ENCODE measurements at regions of chr3 and their contacts with region 1.

Region 1: GRCh38 chr3:57877116-57877515 is 121.0 kb downstream of the SLMAP start:
- DNase-seq: no peak
- H3K4me3 ChIP-seq: no peak overlapping the region
- H3K27ac ChIP-seq: no peak overlapping the region
- H3K4me1 ChIP-seq: no peaks in the 10 kb centered on the region
- H3K27me3 ChIP-seq: no peaks in the 10 kb centered on the region
- CTCF ChIP-seq: no peak

Region 2: GRCh38 chr3:57939775-57940174 is 62.7 kb after region 1 on chr3:
- CTCF ChIA-PET with region 1: no interaction called
- POLR2A ChIA-PET with region 1: interaction called, 11 read pairs
- intact Hi-C with region 1: no loop called
- DNase-seq: no peak
- H3K4me3 ChIP-seq: no peak overlapping the region
- H3K27ac ChIP-seq: no peak overlapping the region
- H3K4me1 ChIP-seq: 0 out of 2 replicates have a peak, but pooled peaks cover 5% of the 10 kb centered on the region
- H3K27me3 ChIP-seq: no peaks in the 10 kb centered on the region
- CTCF ChIP-seq: no peak

Region 3: DNA sequence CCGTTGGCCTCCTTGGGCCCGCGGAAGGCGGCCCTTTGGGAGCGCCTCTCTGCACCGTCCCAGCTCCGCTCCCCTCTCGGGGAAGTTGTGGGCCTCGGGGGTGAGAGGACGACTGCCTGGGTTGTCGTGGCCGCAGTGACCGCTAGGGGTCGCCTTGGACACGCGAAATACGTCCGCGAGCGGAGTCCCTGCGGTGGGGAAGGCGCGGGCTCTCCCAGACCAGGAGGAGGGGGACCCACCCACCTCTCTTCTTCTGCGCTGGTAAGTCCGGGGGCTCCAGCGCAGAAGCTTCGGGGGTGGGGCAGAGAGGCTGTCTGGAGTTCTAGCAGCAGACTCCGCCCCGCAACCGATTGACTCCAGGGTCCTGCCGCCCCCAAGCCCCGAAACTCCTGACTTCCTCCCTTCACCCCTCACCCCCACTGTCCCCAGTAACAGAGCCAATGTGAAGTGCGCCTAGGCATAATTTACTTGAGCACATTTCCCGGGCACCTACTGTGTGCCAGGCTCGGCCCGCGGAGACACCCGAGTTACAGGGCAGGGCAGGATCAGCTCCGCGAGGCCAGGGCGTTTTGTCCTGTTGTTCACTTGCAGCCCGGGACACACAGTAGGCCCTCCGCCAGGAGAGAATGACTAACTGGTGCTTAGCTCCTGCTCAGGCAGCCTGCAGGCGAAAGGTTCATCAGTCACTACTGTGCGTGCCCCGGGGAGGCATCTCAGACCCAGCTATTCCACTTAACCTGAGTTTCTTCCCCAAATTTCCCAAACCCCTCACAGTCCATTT is 300.8 kb after region 1 on chr3:
- CTCF ChIA-PET with region 1: interaction called, 12 read pairs
- POLR2A ChIA-PET with region 1: no interaction called
- intact Hi-C with region 1: no loop called
- DNase-seq: peak in 1 of 2 experiments; percentile 80
- H3K4me3 ChIP-seq: peak overlapping the region; percentile 46; the same call in 1 of the 2 replicates
- H3K27ac ChIP-seq: no peak overlapping the region
- H3K4me1 ChIP-seq: peaks cover 13% of the 10 kb centered on the region
- H3K27me3 ChIP-seq: no peaks in the 10 kb centered on the region
- CTCF ChIP-seq: peak; percentile 90

Measured in PC-9 (cell line).